HCT116 (cell line): ENCODE measurements at regions of chr1 and their contacts with region 1.

Region 1: GRCh38 chr1:207423560-207424292 is 30.4 kb upstream of the CR2 start:
- DNase-seq: no peak
- ATAC-seq: peak; percentile 80
- H3K4me3 ChIP-seq: peak overlapping the region; percentile 1 to 4; a peak in 1 of 4 replicates
- H3K27ac ChIP-seq: no peak overlapping the region
- H3K4me1 ChIP-seq: no peaks in the 10 kb centered on the region
- H3K27me3 ChIP-seq: no peaks in the 10 kb centered on the region
- CTCF ChIP-seq: no peak
- POLR2A ChIP-seq: no peak
- RAD21 ChIP-seq: no peak

Region 2: DNA sequence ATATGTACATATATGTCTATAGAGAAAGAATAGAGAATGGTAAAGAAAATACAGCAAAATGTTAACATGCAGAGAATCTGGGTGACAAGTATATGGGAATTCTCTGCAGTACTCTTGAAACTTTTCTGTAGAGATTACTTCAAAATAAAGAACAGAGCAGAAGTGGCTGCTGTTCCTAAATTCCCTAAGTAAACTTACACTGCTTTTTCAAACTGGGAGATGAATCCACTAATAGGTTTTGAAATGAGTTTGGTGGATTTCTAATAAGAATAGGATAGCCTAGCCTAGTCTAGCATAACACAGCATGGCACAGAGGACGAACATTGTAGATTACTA is 30.0 kb after region 1 on chr1:
- CTCF ChIA-PET with region 1: no interaction called
- POLR2A ChIA-PET with region 1: no interaction called
- RAD21 ChIA-PET with region 1: no interaction called
- intact Hi-C with region 1: loop called (anchors 1 kb)
- DNase-seq: no peak
- ATAC-seq: peak; percentile 36; the same call in 1 of the 2 replicates
- H3K4me3 ChIP-seq: peak overlapping the region; percentile 49 to 63
- H3K27ac ChIP-seq: no peak overlapping the region
- H3K4me1 ChIP-seq: peaks cover 6 to 18% of the 10 kb centered on the region in 2 experiments; a peak in 3 of 4 replicates
- H3K27me3 ChIP-seq: 0 out of 2 replicates have a peak, but pooled peaks cover 5% of the 10 kb centered on the region
- CTCF ChIP-seq: no peak
- POLR2A ChIP-seq: no peak
- RAD21 ChIP-seq: no peak